ENCODE measurements at regions of chr3 and their contacts with region 1.

Region 1: DNA sequence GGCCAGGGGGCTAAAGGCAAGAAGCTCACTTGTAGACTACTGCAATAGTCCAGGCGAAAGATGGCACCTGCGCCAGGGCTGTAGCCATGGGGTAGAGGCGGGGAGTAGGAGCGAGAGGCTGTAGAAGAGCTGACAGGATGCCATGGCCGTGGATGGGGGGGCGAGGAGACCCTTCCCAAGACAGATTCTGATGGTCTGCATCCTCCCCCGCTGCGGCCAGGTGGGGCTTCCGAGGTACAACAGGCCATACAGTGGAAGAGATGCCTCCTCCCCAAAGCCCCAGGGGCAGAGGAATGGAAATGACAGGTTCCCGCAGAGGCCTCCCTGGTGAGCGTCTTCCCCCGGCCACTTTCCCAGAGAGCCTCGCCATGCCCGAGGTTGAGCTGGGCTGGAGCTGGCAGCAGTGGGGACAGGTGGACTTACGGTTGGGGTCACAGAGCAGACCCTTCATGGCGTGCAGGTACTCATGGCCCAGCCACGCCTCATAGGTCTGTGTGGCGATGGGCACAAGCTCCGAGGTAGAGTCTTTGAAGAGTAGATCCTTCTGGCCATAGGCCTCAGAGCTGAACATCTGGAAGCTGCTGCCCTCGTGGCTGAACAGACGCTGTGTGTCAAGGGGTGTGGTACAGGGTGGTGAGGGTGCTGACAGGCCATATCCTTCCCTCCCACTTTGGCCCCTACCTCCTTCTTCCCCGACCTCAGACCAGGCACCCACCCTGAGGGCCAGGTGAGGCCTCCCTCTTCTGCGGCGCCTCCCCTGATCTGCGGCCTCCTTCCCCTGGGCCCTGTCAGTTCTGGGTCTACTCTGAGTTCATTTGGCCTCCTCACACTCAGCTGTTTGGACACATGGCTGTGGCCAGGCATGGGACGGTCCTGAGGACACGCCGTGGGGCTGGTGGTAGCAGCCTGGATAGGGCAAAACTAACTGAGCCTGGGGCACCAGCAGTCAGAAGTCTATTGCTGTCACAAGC is 13.6 kb downstream of the MELTF start:
- DNase-seq: no peak
- H3K4me3 ChIP-seq: no peak overlapping the region
- H3K27ac ChIP-seq: no peak overlapping the region
- H3K4me1 ChIP-seq: no peaks in the 10 kb centered on the region
- H3K27me3 ChIP-seq: no peaks in the 10 kb centered on the region

Region 2: GRCh38 chr3:196263819-196264218 is 752.2 kb before region 1 on chr3:
- CTCF ChIA-PET with region 1: no interaction called
- POLR2A ChIA-PET with region 1: no interaction called
- DNase-seq: no peak
- H3K4me3 ChIP-seq: no peak overlapping the region
- H3K27ac ChIP-seq: no peak overlapping the region
- H3K4me1 ChIP-seq: no peaks in the 10 kb centered on the region
- H3K27me3 ChIP-seq: no peaks in the 10 kb centered on the region

Region 3: DNA sequence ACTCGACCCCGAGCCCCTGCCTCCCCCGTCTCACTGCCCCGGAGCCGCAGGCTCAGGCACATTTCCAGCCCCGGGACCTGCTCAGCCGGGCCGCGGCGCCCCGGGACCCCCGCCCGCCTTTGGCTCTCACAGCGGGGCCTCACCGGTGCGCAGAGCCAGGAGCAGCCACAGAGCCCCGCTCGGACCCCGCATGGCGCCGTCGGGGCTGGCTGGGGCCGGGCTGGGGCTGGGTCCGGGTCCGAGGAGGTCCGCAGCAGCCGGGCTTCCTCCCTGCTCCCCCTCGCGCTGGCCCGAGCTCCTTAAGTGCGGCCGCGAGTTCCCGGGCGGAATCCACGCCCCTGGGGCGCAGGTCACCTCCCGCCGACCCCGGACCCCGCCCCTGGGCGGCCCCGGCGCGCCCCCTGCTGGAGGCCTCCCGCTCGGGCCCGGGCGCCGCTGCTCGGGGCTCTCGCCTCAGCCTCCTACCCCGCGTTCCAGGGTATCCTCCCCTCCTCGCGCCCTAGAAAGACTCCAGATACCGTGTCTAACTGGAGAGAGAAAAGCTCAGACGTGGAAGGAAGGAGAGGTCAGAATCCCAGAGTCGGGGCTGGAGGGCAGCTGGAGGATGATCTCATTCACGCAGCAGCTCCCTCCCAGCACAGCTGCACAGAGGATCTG is 13.6 kb after region 1 on chr3 and contains the start of gene MELTF:
- CTCF ChIA-PET with region 1: interaction called, 15 read pairs
- POLR2A ChIA-PET with region 1: no interaction called
- DNase-seq: peak; percentile 63 to 77 (median 74)
- H3K4me3 ChIP-seq: peak within 1 kb of the TSS; percentile 43 to 79 (median 69)
- H3K27ac ChIP-seq: no peak within 1 kb of the TSS
- H3K4me1 ChIP-seq: peaks cover 0 to 30% (median 21%) of the 10 kb centered on the region in 4 experiments
- H3K27me3 ChIP-seq: peaks cover 0 to 2% (median under 1%) of the 10 kb centered on the region in 5 experiments